ENCODE measurements at regions of chr9 and their contacts with region 1.

Region 1: GRCh38 chr9:101465392-101465791 is 29.8 kb upstream of the ALDOB start:
- H3K4me3 ChIP-seq: no peak overlapping the region
- H3K27ac ChIP-seq: no peak overlapping the region
- H3K4me1 ChIP-seq: no peaks in the 10 kb centered on the region
- CTCF ChIP-seq: peak; percentile 48; the same call in 1 of the 2 replicates

Region 2: DNA sequence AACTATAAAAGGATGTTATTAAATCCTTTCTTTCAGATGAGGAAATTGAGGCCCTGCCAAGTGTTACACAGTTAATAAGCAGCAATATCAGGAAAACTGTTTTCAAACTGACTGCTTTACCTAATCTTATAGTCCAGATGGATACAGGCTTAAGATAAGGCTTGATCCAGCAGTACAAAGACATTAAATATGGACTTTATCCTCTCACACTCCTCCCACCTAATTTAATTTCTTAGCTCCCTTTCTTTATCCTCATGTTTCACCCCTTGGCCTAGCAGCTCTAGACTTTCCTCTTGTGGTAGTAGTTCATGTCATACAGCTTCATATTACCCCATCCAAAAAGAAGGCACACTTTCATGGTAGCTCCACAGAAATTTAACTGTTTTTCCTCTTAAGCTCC is 245.1 kb before region 1 on chr9:
- CTCF ChIA-PET with region 1: no interaction called
- POLR2A ChIA-PET with region 1: no interaction called
- H3K4me3 ChIP-seq: no peak overlapping the region
- H3K27ac ChIP-seq: no peak overlapping the region
- H3K4me1 ChIP-seq: no peaks in the 10 kb centered on the region
- CTCF ChIP-seq: no peak

Region 3: DNA sequence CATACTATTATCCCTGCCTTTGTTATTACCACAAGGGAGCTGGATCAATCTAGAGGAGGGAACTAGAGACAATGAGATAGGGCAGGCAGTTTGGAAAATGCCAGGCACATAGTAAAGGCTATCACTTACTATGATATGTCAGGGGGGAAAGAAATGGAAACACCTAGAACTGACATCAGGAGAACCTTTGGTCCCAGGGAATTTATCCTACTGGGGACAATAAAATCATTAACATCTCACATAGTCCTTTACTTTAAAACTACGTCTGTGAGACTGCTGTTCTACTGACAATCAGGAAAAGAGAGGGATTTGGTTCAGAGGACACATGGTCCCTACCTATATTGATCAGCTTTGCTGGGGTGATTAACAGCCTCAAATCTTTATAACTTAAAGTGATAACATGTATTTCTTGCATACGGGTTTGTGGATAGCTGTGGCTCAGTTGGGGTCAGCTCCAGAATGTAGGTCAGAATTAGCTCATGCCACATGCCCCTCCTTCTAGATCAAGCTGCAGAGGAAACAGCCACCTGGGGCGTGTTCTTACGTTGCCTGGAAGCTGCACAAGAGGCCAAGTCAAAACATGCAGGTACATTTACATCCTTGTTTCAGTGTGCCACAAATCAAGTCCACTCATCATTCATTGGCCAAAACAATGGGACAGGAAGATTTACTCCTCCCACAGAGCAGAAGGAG is 14.1 kb after region 1 on chr9:
- CTCF ChIA-PET with region 1: interaction called, 11 read pairs
- POLR2A ChIA-PET with region 1: no interaction called
- H3K4me3 ChIP-seq: no peak overlapping the region
- H3K27ac ChIP-seq: no peak overlapping the region
- H3K4me1 ChIP-seq: no peaks in the 10 kb centered on the region
- CTCF ChIP-seq: no peak

Region 4: DNA sequence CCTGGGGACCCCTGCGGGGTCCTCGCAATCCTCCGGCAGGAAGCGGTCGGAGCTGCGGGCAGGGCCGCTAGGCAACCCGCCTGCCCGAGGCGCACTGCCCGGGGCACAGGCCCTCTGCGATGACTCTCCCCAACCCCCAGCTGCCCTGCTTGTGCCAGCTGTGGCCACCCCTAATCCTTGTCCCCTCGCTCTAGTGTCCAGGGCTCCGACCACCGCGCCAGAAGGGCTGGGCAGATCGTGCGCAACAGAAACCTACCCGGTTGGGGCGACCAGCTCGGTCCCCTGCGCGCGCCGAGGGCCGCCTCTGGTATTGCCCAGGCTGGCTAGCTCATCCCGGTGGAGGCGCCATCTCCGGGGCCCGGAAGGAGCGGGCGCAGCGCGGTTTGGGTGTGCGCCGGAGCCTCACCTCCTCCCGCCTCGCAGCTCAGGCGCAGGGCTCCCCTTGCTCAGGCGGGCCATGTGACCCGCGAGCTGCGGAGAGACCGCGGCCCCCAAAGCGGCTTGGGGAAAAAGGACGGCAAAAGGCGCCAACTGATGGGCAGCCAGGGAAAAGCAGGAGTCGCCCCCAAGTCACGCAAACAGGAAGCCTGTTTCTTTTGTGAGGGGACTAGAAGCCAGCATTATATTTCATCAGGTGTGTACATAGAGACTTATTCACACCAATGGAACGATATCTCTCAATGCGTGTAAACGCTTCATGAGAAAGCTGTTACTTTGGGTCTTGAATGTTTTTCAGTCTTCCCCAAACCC is 21.5 kb after region 1 on chr9:
- CTCF ChIA-PET with region 1: interaction called, 11 read pairs
- POLR2A ChIA-PET with region 1: interaction called, 5 read pairs
- H3K4me3 ChIP-seq: peak overlapping the region; percentile 53
- H3K27ac ChIP-seq: peak overlapping the region; percentile 72; the same call in 1 of the 2 replicates
- H3K4me1 ChIP-seq: no peaks in the 10 kb centered on the region
- CTCF ChIP-seq: peak; percentile 73

Measured in HEK293 (cell line).